ENCODE measurements at regions of chrX and their contacts with region 1.

Region 1: DNA sequence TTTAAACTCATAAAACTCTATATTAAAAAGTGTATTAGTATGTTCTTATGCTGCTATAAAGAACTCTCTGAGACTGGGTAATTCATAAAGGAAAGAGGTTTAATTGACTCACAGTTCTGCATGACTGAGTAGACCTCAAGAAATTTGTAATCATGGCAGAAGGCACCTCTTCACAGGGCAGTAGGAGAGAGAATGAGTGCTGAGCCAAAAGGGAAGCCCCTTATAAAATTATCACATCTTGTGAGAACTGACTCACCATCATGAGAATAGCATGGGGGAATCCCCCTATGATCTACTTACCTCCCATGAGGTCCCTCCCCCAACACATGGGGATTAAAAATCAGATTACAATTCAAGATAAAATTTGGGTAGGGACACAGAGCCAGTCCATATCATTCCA is 463.2 kb downstream of the KLHL13 start:
- DNase-seq: no peak
- ATAC-seq: no peak

Region 2: DNA sequence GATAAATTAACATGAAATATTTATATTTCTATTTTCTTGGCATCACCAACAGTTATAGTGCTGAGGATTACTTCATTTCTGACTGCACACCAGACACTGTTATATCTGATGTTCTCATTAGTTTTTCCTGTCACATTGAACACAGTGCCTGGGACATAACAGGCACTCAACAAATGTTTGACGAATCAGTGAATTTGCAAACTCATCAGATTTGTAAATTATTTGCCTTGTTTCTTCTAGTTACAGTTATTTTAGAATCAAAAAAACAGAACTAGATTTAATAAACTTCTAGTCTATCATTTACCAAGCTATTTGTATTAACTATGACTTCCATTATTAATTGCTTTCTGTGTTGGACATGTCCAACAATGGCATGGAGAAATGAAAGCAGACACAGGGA is 20.1 kb before region 1 on chrX:
- intact Hi-C with region 1: loop called in 1 of 2 experiments (anchors 2 kb)
- DNase-seq: no peak
- ATAC-seq: no peak

Region 3: GRCh38 chrX:117768861-117769604 is 115.6 kb after region 1 on chrX:
- intact Hi-C with region 1: no loop called
- DNase-seq: no peak
- ATAC-seq: no peak

Measured in left cardiac atrium (tissue), 4 donors.